HEK293 (cell line): ENCODE measurements at regions of chr16 and their contacts with region 1.

Region 1: GRCh38 chr16:53346-54236 is at the starts of genes POLR3K and SNRNP25:
- H3K4me3 ChIP-seq: peak within 1 kb of the TSS; percentile 91
- H3K27ac ChIP-seq: peak within 1 kb of the TSS; percentile 84
- H3K4me1 ChIP-seq: no peaks in the 10 kb centered on the region
- CTCF ChIP-seq: no peak

Region 2: GRCh38 chr16:38939-39892 is 14.4 kb before region 1 on chr16:
- CTCF ChIA-PET with region 1: interaction called, 4 read pairs
- POLR2A ChIA-PET with region 1: interaction called, 20 read pairs
- H3K4me3 ChIP-seq: no peak overlapping the region
- H3K27ac ChIP-seq: no peak overlapping the region
- H3K4me1 ChIP-seq: no peaks in the 10 kb centered on the region
- CTCF ChIP-seq: no peak

Region 3: GRCh38 chr16:72561-73548 is 19.3 kb after region 1 on chr16 and contains the start of gene RHBDF1:
- CTCF ChIA-PET with region 1: no interaction called
- POLR2A ChIA-PET with region 1: interaction called, 17 read pairs
- H3K4me3 ChIP-seq: peak within 1 kb of the TSS; percentile 51
- H3K27ac ChIP-seq: peak within 1 kb of the TSS; percentile 47
- H3K4me1 ChIP-seq: peaks cover 18% of the 10 kb centered on the region
- CTCF ChIP-seq: no peak

Region 4: GRCh38 chr16:180938-181667 is 127.5 kb after region 1 on chr16:
- CTCF ChIA-PET with region 1: no interaction called
- POLR2A ChIA-PET with region 1: no interaction called
- H3K4me3 ChIP-seq: no peak overlapping the region; the same call in 1 of the 2 replicates
- H3K27ac ChIP-seq: peak overlapping the region; percentile 25; the same call in 1 of the 2 replicates
- H3K4me1 ChIP-seq: peaks cover 3% of the 10 kb centered on the region; the same call in 1 of the 2 replicates
- CTCF ChIP-seq: peak; percentile 96

Region 5: DNA sequence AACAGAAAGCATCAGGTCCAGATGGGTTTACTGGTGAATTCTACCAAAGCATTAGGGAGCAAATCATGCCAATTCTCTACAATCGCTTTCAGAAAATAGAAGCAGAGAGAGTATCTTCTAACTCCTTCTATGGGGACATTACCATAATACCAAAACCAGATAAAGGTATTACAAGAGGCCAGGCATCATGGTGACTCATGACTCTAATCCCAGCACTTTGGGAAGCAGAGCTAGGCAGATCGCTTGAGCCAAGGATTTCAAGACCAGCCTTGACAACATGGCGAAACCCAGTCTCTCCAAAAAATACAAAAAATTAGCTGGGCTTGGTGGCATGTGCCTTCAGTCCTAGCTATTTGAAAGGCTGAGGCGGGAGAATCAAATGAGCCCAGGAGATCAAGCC is 149.7 kb after region 1 on chr16:
- CTCF ChIA-PET with region 1: no interaction called
- POLR2A ChIA-PET with region 1: no interaction called
- H3K4me3 ChIP-seq: no peak overlapping the region
- H3K27ac ChIP-seq: no peak overlapping the region
- H3K4me1 ChIP-seq: no peaks in the 10 kb centered on the region
- CTCF ChIP-seq: no peak

Region 6: DNA sequence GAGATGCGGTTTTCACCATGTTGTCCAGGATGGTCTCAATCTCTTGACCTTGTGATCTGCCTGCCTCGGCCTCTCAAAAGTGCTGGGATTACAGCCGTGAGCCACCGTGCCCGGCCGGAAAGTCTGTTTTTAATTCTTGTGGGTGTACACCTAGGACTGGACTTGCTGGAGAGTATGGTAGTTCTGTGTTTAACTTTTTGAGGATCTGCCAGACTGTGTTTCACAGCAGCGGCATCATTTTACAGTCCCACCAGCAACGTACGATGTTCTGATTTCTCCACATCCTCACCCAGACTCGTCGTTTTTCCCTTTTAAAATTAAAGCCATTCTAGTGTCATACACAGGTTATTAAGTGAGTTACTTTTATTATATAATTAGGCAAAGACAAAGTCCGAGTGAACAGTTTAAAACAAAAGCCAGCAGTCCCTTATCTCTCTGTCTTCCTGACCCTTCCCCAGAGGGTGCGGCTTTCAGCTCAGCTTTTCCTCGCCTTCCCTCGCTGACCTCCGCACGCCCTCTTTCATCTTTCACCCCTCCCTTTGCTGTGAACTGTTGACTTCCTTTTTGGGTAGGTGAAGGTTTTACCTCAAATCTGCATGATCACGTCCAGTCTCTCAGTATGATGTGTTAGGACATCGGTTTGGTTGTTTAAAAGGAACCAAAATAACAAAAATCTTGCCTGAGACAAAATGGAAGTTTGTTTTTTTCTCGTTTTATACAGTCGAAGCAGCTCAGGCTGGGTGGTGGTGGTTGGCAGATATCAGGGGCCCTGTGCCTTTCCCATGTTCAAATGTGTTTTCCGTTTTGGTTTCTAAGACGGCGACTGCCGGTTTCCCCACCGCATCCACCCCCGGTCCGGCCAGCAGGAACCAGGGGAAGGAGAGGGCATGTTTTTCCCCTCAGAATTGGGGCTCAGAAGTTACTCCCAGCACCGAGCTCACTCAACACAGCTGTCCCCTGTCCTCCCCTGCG is 199.1 kb after region 1 on chr16:
- CTCF ChIA-PET with region 1: no interaction called
- POLR2A ChIA-PET with region 1: no interaction called
- H3K4me3 ChIP-seq: no peak overlapping the region
- H3K27ac ChIP-seq: no peak overlapping the region
- H3K4me1 ChIP-seq: no peaks in the 10 kb centered on the region
- CTCF ChIP-seq: no peak

Region 7: GRCh38 chr16:1152651-1153259 is 1099.2 kb after region 1 on chr16 and contains the start of gene CACNA1H:
- CTCF ChIA-PET with region 1: no interaction called
- POLR2A ChIA-PET with region 1: no interaction called
- H3K4me3 ChIP-seq: peak within 1 kb of the TSS; percentile 28
- H3K27ac ChIP-seq: no peak within 1 kb of the TSS; the same call in 1 of the 2 replicates
- H3K4me1 ChIP-seq: no peaks in the 10 kb centered on the region
- CTCF ChIP-seq: no peak